ENCODE measurements at regions of chr2 and their contacts with region 1.

Region 1: DNA sequence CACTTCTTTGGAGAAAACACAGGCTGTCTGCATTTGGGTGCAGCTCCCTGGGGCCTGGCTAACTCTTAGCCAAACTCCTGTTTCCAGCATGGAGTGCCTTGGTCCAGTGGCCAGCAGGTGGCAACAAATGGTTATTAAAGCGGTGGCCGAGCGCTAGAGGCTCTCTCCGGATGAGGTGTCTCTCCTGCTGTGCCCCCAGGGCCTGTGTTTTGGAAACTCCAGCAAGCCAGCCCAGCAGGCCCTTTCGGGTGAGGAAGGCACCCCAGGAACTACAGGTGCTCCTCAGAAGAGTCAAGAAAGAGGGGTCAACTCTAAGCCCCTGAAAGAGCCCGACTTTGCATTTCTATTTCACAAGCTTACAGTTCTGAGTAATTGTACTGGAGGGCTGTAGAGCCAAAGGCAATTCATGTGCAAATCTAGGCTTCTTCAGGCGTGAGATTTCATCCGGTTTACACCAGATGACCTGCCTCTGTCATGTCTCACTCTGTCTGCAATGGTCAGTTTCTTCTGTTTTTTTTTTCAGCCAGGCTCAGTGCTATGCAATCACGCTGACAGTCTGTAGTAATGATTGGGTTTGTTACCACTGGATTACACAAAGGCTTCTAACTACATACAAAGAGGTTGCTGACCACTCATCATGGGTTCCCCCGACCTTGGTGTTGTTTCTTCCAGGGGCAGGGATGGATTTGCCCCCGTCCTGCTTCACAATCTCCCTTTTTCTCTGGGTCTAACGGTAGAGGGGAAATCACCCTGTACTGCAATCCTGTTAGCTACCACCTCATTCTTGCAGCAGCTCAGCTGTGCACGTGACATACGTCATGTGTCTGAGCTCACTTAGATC is 7.6 kb upstream of the CHRNA1 start:
- DNase-seq: peak; percentile 87
- H3K4me3 ChIP-seq: no peak overlapping the region
- H3K27ac ChIP-seq: peak overlapping the region; percentile 17 to 52 (median 36)
- H3K4me1 ChIP-seq: peaks cover 0 to 20% (median 5%) of the 10 kb centered on the region in 4 donors
- H3K27me3 ChIP-seq: no peaks in the 10 kb centered on the region
- CTCF ChIP-seq: peak; percentile 55 to 82 (median 73)
- EP300 ChIP-seq: no peak
- POLR2A ChIP-seq: no peak

Region 2: GRCh38 chr2:174985630-174986029 is 213.8 kb after region 1 on chr2:
- intact Hi-C with region 1: loop called (anchors 1 kb)
- DNase-seq: no peak
- H3K4me3 ChIP-seq: no peak overlapping the region
- H3K27ac ChIP-seq: no peak overlapping the region
- H3K4me1 ChIP-seq: peaks cover 0 to 4% (median 2%) of the 10 kb centered on the region in 4 donors
- H3K27me3 ChIP-seq: no peaks in the 10 kb centered on the region
- CTCF ChIP-seq: peak in 3 of 4 experiments; percentile 31 to 37 (median 35)
- EP300 ChIP-seq: no peak
- POLR2A ChIP-seq: no peak